ENCODE measurements at regions of chr1 and their contacts with region 1.

Region 1: GRCh38 chr1:214446772-214447556 is 104.4 kb downstream of the PTPN14 start:
- DNase-seq: peak; percentile 93
- ATAC-seq: peak; percentile 88
- H3K4me3 ChIP-seq: peak overlapping the region; percentile 41 to 58
- H3K27ac ChIP-seq: peak overlapping the region; percentile 81
- H3K4me1 ChIP-seq: peaks cover 47 to 58% of the 10 kb centered on the region in 2 experiments
- H3K27me3 ChIP-seq: no peaks in the 10 kb centered on the region
- CTCF ChIP-seq: no peak
- POLR2A ChIP-seq: no peak
- RAD21 ChIP-seq: peak; percentile 42

Region 2: DNA sequence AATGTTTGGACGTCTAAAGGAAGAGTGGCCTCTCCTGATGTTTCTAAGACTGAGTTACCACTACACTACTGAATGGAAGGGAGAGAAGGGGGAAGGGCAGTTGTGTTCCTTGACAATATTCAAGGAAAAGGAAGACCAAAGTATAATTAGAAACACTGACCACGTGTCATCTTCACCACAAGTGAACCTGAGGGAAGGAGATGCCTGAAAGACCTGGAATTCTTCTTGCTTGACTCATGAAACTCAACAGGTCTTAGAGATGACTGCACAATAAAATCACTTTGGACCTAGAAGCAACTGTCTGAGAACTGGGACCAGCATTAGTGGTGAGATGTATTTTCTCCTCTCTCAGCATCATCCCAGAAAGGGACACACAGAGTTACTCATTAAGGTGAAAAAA is 47.7 kb after region 1 on chr1:
- CTCF ChIA-PET with region 1: no interaction called
- POLR2A ChIA-PET with region 1: no interaction called
- RAD21 ChIA-PET with region 1: no interaction called
- intact Hi-C with region 1: loop called (anchors 2 kb)
- DNase-seq: peak; percentile 81
- ATAC-seq: peak; percentile 78
- H3K4me3 ChIP-seq: peak overlapping the region; percentile 22 to 55
- H3K27ac ChIP-seq: peak overlapping the region; percentile 64
- H3K4me1 ChIP-seq: peaks cover 47 to 61% of the 10 kb centered on the region in 2 experiments
- H3K27me3 ChIP-seq: no peaks in the 10 kb centered on the region
- CTCF ChIP-seq: no peak
- POLR2A ChIP-seq: no peak
- RAD21 ChIP-seq: no peak

Region 3: DNA sequence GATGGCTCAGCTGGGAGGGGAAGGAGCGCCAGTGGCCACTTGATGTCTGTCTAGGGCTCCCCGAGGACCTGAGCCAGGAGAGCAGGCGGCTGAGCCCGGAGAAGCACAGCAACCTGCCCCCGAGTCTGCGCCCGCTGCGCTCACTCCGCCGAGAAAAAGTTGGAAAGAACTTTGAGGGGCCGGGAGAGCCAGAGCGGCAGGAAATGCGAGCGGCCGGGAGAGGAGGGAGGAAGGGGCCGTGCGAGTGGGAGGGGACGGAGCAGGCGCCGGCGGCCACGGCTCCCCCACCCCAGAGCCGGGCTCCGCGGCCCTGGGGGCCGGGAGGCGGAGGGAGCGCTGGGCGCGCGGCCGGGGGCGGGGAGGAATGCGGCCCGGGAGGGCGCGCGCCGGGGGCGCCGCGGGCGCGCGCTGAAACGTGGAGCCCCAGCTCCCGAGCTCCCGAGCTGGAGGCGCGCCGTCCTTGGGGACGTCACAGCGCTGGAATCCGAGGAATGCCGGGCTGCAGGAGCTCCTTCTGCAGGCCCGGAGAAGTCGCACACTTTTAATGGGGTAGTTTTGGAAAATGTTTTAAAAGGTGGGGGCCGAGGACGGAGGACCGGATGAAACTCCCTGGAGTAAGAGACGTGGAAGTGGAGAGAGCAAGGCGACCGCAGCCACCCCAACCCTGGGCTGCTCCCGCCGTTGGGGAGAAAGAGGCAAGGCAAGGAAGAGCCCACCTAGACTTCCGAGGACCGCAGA is 104.6 kb after region 1 on chr1 and contains the start of gene PTPN14:
- CTCF ChIA-PET with region 1: no interaction called
- POLR2A ChIA-PET with region 1: no interaction called
- RAD21 ChIA-PET with region 1: no interaction called
- intact Hi-C with region 1: loop called (anchors 2 kb)
- DNase-seq: peak; percentile 85
- ATAC-seq: peak; percentile 83
- H3K4me3 ChIP-seq: peak within 1 kb of the TSS; percentile 80 to 93
- H3K27ac ChIP-seq: peak within 1 kb of the TSS; percentile 87
- H3K4me1 ChIP-seq: peaks cover 30 to 39% of the 10 kb centered on the region in 2 experiments
- H3K27me3 ChIP-seq: no peaks in the 10 kb centered on the region
- CTCF ChIP-seq: peak in 2 of 3 experiments; percentile 25 to 33; a peak in 3 of 6 replicates
- POLR2A ChIP-seq: no peak
- RAD21 ChIP-seq: 0 out of 2 replicates have a peak, but pooled peaks have one; percentile 19
- total RNA-seq, gene PTPN14: 37.5 TPM

Region 4: GRCh38 chr1:214847071-214847810 is 400.3 kb after region 1 on chr1:
- CTCF ChIA-PET with region 1: no interaction called
- POLR2A ChIA-PET with region 1: no interaction called
- RAD21 ChIA-PET with region 1: no interaction called
- intact Hi-C with region 1: no loop called
- DNase-seq: no peak
- ATAC-seq: no peak
- H3K4me3 ChIP-seq: no peak overlapping the region
- H3K27ac ChIP-seq: no peak overlapping the region
- H3K4me1 ChIP-seq: no peaks in the 10 kb centered on the region
- H3K27me3 ChIP-seq: no peaks in the 10 kb centered on the region
- CTCF ChIP-seq: no peak
- POLR2A ChIP-seq: no peak
- RAD21 ChIP-seq: no peak

Measured in HCT116 (cell line).